ENCODE measurements at regions of chr3 and their contacts with region 1.

Region 1: DNA sequence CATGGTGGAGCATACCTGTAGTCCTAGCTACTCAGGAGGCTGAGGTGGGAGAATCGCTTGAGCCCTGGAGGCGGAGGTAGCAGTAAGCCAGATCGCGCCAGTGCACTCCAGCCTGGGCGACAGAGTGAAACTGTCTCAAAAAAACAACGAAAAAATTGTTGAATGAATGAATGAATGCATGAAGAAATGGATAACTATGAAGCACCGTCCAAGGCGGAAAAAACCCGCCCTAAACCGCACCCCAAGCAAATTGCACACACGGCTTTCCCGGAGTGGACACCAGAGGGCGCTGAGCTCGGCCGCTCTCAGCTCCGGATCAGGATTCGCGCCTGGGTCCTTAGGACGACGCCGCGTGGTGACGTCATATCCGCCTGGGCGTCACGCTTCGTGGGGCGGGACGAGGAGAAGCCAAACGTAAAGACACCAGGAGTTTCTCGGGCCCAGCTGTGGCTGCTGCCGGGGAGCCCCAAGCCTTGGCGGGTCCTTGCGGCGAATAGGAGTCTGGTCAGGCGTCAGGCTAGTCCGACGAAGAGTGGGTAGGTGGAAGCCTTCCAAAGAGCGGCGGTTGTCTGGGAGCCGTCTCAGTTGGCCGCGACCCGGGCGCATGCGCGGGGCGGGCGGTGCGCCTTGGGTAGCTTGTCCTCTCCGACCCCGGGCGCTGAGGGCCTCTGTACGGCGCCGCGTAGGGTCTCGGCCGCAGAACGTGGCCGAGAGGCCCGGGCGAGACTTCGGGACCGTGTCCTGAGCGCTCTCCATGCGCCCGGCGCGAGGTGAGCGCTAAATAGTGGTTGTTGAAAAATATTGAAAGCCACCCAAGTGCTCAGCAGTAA is at the starts of genes HTD2 and RPP14:
- DNase-seq: peak; percentile 98
- H3K4me3 ChIP-seq: peak within 1 kb of the TSS; percentile 81 to 98 (median 94)
- H3K27ac ChIP-seq: peak within 1 kb of the TSS; percentile 96
- H3K4me1 ChIP-seq: peaks cover 19% of the 10 kb centered on the region
- H3K27me3 ChIP-seq: peaks cover 15 to 16% of the 10 kb centered on the region in 2 experiments
- CTCF ChIP-seq: peak; percentile 98
- POLR2A ChIP-seq: peak; percentile 92
- total RNA-seq, gene HTD2: 10.0 and 10.3 TPM in 2 replicates
- total RNA-seq, gene RPP14: 18.1 and 21.3 TPM in 2 replicates

Region 2: GRCh38 chr3:58177747-58178527 is 128.2 kb before region 1 on chr3:
- CTCF ChIA-PET with region 1: interaction called, 369 read pairs
- POLR2A ChIA-PET with region 1: no interaction called
- dilution Hi-C with region 1: no loop called
- intact Hi-C with region 1: no loop called
- DNase-seq: peak; percentile 79
- H3K4me3 ChIP-seq: peak overlapping the region in 2 of 3 experiments; percentile 8 to 22
- H3K27ac ChIP-seq: no peak overlapping the region
- H3K4me1 ChIP-seq: peaks cover 34% of the 10 kb centered on the region
- H3K27me3 ChIP-seq: no peaks in the 10 kb centered on the region
- CTCF ChIP-seq: peak; percentile 89 to 97
- POLR2A ChIP-seq: peak; percentile 36

Region 3: GRCh38 chr3:58237238-58237940 is 68.7 kb before region 1 on chr3 and contains the start of gene ABHD6:
- CTCF ChIA-PET with region 1: interaction called, 10 read pairs
- POLR2A ChIA-PET with region 1: interaction called, 3 read pairs
- dilution Hi-C with region 1: no loop called
- intact Hi-C with region 1: loop called (anchors 2 kb)
- DNase-seq: peak; percentile 66
- H3K4me3 ChIP-seq: peak within 1 kb of the TSS; percentile 65 to 73 (median 71)
- H3K27ac ChIP-seq: peak within 1 kb of the TSS; percentile 25
- H3K4me1 ChIP-seq: peaks cover 6% of the 10 kb centered on the region
- H3K27me3 ChIP-seq: peaks cover 4 to 6% of the 10 kb centered on the region in 2 experiments
- CTCF ChIP-seq: peak in 1 of 2 donors; percentile 17
- POLR2A ChIP-seq: peak; percentile 41
- total RNA-seq, gene ABHD6: 5.4 and 5.8 TPM in 2 replicates

Region 4: DNA sequence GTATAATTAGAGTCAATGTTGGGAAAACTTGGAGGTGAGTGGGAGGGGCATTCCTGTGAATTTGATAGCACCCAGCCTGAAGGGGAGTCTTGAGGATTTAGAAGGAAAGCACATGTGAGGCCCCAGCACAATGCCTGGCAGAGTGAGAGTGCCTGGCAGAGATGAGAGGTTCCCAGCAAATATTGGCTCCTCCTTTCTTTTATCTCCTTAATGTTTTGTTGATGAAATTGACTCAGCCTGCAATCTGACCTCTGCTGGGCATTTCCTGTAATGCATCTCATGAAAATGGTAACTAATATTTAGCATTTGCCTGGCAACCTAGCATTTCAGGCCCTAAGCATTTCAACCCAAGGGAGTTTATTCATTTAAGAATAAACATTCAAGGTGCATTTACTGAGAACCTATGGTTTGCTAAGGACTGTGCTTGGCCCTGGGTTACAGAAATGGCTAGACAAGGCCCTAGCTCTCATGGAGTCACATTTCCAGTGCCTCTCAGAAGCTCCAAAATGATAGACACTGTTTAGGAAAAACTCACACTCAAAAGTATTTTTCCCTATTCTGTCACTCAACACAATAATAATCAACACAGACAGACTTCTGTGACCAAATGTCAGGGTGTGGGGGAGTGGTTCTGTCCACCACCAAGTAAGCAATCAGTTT is 108.6 kb after region 1 on chr3:
- CTCF ChIA-PET with region 1: interaction called, 37 read pairs
- POLR2A ChIA-PET with region 1: no interaction called
- dilution Hi-C with region 1: no loop called
- intact Hi-C with region 1: loop called (anchors 1 kb)
- DNase-seq: peak; percentile 79
- H3K4me3 ChIP-seq: no peak overlapping the region
- H3K27ac ChIP-seq: no peak overlapping the region
- H3K4me1 ChIP-seq: no peaks in the 10 kb centered on the region
- H3K27me3 ChIP-seq: no peaks in the 10 kb centered on the region
- CTCF ChIP-seq: peak; percentile 64
- POLR2A ChIP-seq: no peak

Region 5: GRCh38 chr3:58532794-58533220 is 226.7 kb after region 1 on chr3:
- CTCF ChIA-PET with region 1: interaction called, 18 read pairs
- POLR2A ChIA-PET with region 1: no interaction called
- dilution Hi-C with region 1: no loop called
- intact Hi-C with region 1: loop called (anchors 1 kb)
- DNase-seq: peak; percentile 55
- H3K4me3 ChIP-seq: no peak overlapping the region
- H3K27ac ChIP-seq: no peak overlapping the region
- H3K4me1 ChIP-seq: peaks cover 21% of the 10 kb centered on the region
- H3K27me3 ChIP-seq: no peaks in the 10 kb centered on the region
- CTCF ChIP-seq: peak; percentile 90 to 91
- POLR2A ChIP-seq: no peak

Region 6: DNA sequence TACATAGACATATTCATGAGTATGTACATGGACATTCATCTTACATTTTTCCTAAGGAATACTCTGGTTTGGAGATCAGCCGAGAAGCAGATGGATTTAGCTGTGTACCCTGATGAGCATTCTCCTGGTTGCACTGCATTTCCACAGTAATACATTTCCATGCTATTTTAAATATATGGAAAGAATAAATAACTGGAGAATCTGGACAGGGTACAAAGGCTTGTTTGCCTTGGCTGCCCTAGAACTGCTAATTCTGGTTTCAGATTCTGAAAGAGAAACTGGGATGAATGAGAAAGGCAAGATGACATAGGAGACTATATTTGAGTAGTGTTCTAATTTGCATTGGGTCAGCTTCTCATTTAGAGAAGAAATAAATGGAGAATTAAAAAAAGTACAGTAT is 551.3 kb after region 1 on chr3:
- CTCF ChIA-PET with region 1: no interaction called
- POLR2A ChIA-PET with region 1: no interaction called
- dilution Hi-C with region 1: no loop called
- intact Hi-C with region 1: no loop called
- DNase-seq: no peak
- H3K4me3 ChIP-seq: no peak overlapping the region
- H3K27ac ChIP-seq: no peak overlapping the region
- H3K4me1 ChIP-seq: no peaks in the 10 kb centered on the region
- H3K27me3 ChIP-seq: no peaks in the 10 kb centered on the region
- CTCF ChIP-seq: no peak
- POLR2A ChIP-seq: no peak

Measured in endothelial cell of umbilical vein (primary cell).